Heart right ventricle (tissue), 16 donors: ENCODE measurements at regions of chr17 and their contacts with region 1.

Region 1: DNA sequence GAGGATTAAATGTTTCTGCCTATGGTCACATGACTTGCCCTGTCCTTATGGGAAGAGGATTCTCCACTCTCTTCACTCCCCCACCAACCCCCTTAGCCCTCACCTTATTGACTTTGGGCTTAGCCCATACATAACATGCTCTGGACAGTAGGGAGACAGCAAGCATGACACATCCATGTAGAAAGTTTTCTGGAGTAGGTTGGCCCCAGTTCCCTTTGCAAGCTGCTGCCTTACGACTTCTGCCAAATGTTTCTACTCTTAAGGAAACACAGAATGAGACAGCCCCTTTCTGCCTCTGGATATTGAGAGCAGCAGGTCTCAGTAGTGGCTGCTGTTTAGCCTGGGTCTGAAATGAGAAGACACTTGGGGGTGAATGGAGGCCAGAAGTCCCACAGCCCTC is 282.2 kb downstream of the MAP2K6 start:
- DNase-seq: no peak
- ATAC-seq: peak in 5 of 8 donors; percentile 19 to 67 (median 47)
- H3K4me3 ChIP-seq: no peak overlapping the region
- H3K27ac ChIP-seq: no peak overlapping the region
- H3K4me1 ChIP-seq: peaks cover 0 to 12% (median 2%) of the 10 kb centered on the region in 9 donors
- H3K27me3 ChIP-seq: no peaks in the 10 kb centered on the region
- CTCF ChIP-seq: no peak

Region 2: GRCh38 chr17:69637446-69638156 is 59.0 kb before region 1 on chr17:
- intact Hi-C with region 1: loop called in 1 of 10 experiments (anchors 10 kb)
- DNase-seq: peak in 1 of 2 donors; percentile 6
- ATAC-seq: peak in 2 of 8 donors; percentile 61 to 69
- H3K4me3 ChIP-seq: no peak overlapping the region
- H3K27ac ChIP-seq: no peak overlapping the region
- H3K4me1 ChIP-seq: peaks cover 0 to 5% (median 0%) of the 10 kb centered on the region in 9 donors
- H3K27me3 ChIP-seq: no peaks in the 10 kb centered on the region
- CTCF ChIP-seq: no peak

Region 3: GRCh38 chr17:69669441-69670178 is 27.0 kb before region 1 on chr17:
- intact Hi-C with region 1: no loop called
- DNase-seq: no peak
- ATAC-seq: no peak
- H3K4me3 ChIP-seq: no peak overlapping the region
- H3K27ac ChIP-seq: no peak overlapping the region
- H3K4me1 ChIP-seq: peaks cover 0 to 6% (median 0%) of the 10 kb centered on the region in 9 donors
- H3K27me3 ChIP-seq: no peaks in the 10 kb centered on the region
- CTCF ChIP-seq: no peak

Region 4: GRCh38 chr17:69743091-69743490 is 46.4 kb after region 1 on chr17:
- intact Hi-C with region 1: no loop called
- DNase-seq: no peak
- ATAC-seq: no peak
- H3K4me3 ChIP-seq: no peak overlapping the region
- H3K27ac ChIP-seq: no peak overlapping the region
- H3K4me1 ChIP-seq: no peaks in the 10 kb centered on the region
- H3K27me3 ChIP-seq: no peaks in the 10 kb centered on the region
- CTCF ChIP-seq: no peak

Region 5: DNA sequence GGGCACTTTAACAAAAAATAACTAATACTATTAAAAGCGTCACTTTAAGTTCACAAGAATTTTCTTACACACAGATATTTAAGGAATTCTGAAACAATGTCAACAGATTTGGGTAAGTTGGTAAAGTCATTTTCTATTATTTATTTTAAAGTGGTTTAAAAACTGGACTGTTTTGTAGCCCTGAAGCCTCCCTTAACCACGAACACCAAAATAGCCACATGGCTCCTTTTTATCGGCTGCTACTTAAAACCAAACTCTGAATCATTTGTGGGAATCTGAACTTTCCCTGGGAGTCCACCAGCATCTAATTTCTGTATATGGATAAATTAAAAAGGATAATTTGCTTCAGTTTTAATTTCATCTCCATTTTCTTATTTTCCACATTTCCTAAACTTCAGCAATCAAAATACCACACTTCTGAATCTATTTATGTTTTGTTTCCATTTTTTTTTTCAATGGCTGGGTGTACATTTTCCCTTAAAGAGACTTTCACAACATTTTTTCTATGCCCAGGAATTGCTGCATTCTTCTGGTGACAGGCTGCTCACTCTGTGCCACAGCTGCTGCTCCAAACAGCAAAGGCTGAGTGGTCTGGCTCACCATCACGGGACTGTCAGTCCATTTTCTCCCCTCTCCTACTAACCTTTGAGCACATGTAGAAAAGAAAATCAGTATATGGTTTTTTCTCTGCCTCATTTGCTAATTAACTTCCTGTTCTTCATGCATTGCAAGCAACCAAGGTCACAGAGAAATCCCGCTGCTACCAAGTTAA is 122.9 kb after region 1 on chr17:
- intact Hi-C with region 1: no loop called
- DNase-seq: no peak
- ATAC-seq: no peak
- H3K4me3 ChIP-seq: no peak overlapping the region
- H3K27ac ChIP-seq: no peak overlapping the region
- H3K4me1 ChIP-seq: peaks cover 0 to 6% (median 0%) of the 10 kb centered on the region in 9 donors
- H3K27me3 ChIP-seq: no peaks in the 10 kb centered on the region
- CTCF ChIP-seq: no peak